ENCODE measurements at regions of chr11 and their contacts with region 1.

Region 1: GRCh38 chr11:9479899-9480298 is 19.1 kb downstream of the ZNF143 start:
- DNase-seq: peak; percentile 72
- H3K4me3 ChIP-seq: no peak overlapping the region
- H3K27ac ChIP-seq: peak overlapping the region; percentile 58
- H3K4me1 ChIP-seq: peaks cover 15% of the 10 kb centered on the region
- CTCF ChIP-seq: no peak

Region 2: DNA sequence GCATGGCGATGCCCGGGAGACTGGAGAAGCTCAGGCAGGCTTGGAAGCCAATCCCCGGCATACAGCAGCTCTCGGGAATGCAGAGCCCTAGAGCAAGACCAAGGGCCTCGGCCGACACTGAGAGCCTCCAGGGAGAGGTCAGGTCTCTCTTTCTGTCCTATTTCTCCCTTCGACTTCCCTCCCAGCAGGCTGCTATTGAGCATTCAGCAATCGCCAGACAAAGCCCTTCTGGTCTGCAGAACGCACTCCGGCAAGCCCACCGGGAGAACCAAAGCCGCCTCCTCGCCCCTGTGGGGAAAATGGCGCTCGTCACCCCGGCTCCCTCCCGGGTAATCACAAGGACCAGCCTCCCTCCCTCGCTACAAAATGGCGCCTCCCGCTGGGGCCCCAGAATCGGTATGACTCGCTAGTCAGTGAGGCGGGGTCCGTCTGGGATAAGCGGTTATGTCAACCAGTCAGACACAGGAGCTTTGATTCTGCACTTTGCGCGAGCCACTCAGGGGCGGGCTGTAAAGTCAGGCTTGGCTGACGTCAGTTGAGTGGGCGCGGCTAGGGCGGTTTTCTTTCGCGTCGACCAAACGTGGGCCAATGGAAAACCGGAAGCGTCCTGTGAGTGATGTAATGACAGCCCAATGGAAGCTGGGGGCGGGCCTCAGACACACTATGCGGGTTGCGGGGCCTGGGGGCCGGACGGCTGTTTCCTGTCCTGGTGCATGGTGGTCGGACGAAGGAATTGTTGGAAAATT is 19.4 kb before region 1 on chr11 and contains the start of gene ZNF143:
- CTCF ChIA-PET with region 1: no interaction called
- POLR2A ChIA-PET with region 1: interaction called, 13 read pairs
- intact Hi-C with region 1: no loop called
- DNase-seq: peak; percentile 100
- H3K4me3 ChIP-seq: peak within 1 kb of the TSS; percentile 97
- H3K27ac ChIP-seq: peak within 1 kb of the TSS; percentile 97
- H3K4me1 ChIP-seq: peaks cover 28% of the 10 kb centered on the region
- CTCF ChIP-seq: no peak
- total RNA-seq, gene ZNF143: 25.0 and 36.2 TPM in 2 replicates

Region 3: GRCh38 chr11:9498457-9499078 is 18.7 kb after region 1 on chr11:
- CTCF ChIA-PET with region 1: no interaction called
- POLR2A ChIA-PET with region 1: interaction called, 10 read pairs
- intact Hi-C with region 1: no loop called
- DNase-seq: no peak
- H3K4me3 ChIP-seq: no peak overlapping the region
- H3K27ac ChIP-seq: no peak overlapping the region
- H3K4me1 ChIP-seq: no peaks in the 10 kb centered on the region
- CTCF ChIP-seq: no peak